SK-N-SH (cell line): ENCODE measurements at regions of chr17 and their contacts with region 1.

Region 1: GRCh38 chr17:3865176-3865575 is 19.1 kb upstream of the NCBP3 start:
- DNase-seq: no peak
- H3K4me3 ChIP-seq: no peak overlapping the region
- H3K27ac ChIP-seq: no peak overlapping the region
- H3K4me1 ChIP-seq: no peaks in the 10 kb centered on the region; a peak in 1 of 4 replicates
- H3K27me3 ChIP-seq: no peaks in the 10 kb centered on the region
- CTCF ChIP-seq: no peak
- EP300 ChIP-seq: no peak
- RAD21 ChIP-seq: no peak

Region 2: GRCh38 chr17:3796110-3796821 is 68.9 kb before region 1 on chr17:
- CTCF ChIA-PET with region 1: no interaction called
- POLR2A ChIA-PET with region 1: no interaction called
- DNase-seq: no peak
- H3K4me3 ChIP-seq: no peak overlapping the region
- H3K27ac ChIP-seq: no peak overlapping the region
- H3K4me1 ChIP-seq: no peaks in the 10 kb centered on the region
- H3K27me3 ChIP-seq: no peaks in the 10 kb centered on the region
- CTCF ChIP-seq: no peak
- EP300 ChIP-seq: no peak
- RAD21 ChIP-seq: no peak

Region 3: GRCh38 chr17:3879186-3879585 is 14.0 kb after region 1 on chr17:
- CTCF ChIA-PET with region 1: interaction called, 38 read pairs
- POLR2A ChIA-PET with region 1: no interaction called
- DNase-seq: peak; percentile 85
- H3K4me3 ChIP-seq: no peak overlapping the region
- H3K27ac ChIP-seq: peak overlapping the region in 1 of 2 experiments; percentile 73; a peak in 2 of 4 replicates
- H3K4me1 ChIP-seq: peaks cover 0 to 23% of the 10 kb centered on the region in 2 experiments; a peak in 1 of 4 replicates
- H3K27me3 ChIP-seq: no peaks in the 10 kb centered on the region
- CTCF ChIP-seq: no peak
- EP300 ChIP-seq: no peak; a peak in 1 of 4 replicates
- RAD21 ChIP-seq: peak; percentile 3; the same call in 1 of the 2 replicates

Region 4: GRCh38 chr17:3885271-3885670 is 20.1 kb after region 1 on chr17:
- CTCF ChIA-PET with region 1: interaction called, 38 read pairs
- POLR2A ChIA-PET with region 1: no interaction called
- DNase-seq: no peak
- H3K4me3 ChIP-seq: no peak overlapping the region
- H3K27ac ChIP-seq: no peak overlapping the region
- H3K4me1 ChIP-seq: peaks cover 9 to 17% of the 10 kb centered on the region in 2 experiments; a peak in 3 of 4 replicates
- H3K27me3 ChIP-seq: no peaks in the 10 kb centered on the region
- CTCF ChIP-seq: no peak
- EP300 ChIP-seq: no peak
- RAD21 ChIP-seq: no peak

Region 5: GRCh38 chr17:4074831-4075495 is 209.8 kb after region 1 on chr17:
- CTCF ChIA-PET with region 1: interaction called, 32 read pairs
- POLR2A ChIA-PET with region 1: no interaction called
- DNase-seq: peak; percentile 61
- H3K4me3 ChIP-seq: no peak overlapping the region; a peak in 1 of 4 replicates
- H3K27ac ChIP-seq: no peak overlapping the region
- H3K4me1 ChIP-seq: no peaks in the 10 kb centered on the region
- H3K27me3 ChIP-seq: no peaks in the 10 kb centered on the region
- CTCF ChIP-seq: peak; percentile 81
- EP300 ChIP-seq: no peak
- RAD21 ChIP-seq: peak; percentile 79